ENCODE measurements at regions of chr18 and their contacts with region 1.

Region 1: DNA sequence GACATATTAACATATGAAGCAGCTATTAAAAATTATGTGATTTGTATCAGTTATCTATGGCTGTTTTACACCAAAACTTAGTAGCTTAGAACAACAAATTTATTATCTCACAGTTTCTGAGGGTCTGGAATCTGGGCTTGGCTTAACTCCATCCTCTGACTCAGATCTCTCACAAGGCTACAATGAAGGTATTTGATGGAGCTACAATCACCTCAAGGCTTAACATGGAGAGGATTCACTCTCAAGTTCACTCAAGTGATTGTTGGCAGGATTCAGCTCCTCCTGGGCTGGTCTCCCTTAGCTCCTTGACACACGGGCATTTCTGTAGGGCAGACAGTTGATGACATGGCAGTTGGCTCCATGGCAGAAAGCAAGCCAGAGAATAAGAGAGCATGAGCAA is 133.0 kb upstream of the SLC14A2 start:
- DNase-seq: no peak
- H3K4me3 ChIP-seq: no peak overlapping the region
- H3K27ac ChIP-seq: no peak overlapping the region
- H3K4me1 ChIP-seq: no peaks in the 10 kb centered on the region
- H3K27me3 ChIP-seq: no peaks in the 10 kb centered on the region
- CTCF ChIP-seq: no peak
- POLR2A ChIP-seq: no peak

Region 2: GRCh38 chr18:44819944-44820510 is 662.3 kb before region 1 on chr18:
- CTCF ChIA-PET with region 1: no interaction called
- POLR2A ChIA-PET with region 1: no interaction called
- dilution Hi-C with region 1: no loop called
- intact Hi-C with region 1: loop called (anchors 5 kb)
- DNase-seq: no peak
- H3K4me3 ChIP-seq: no peak overlapping the region
- H3K27ac ChIP-seq: no peak overlapping the region
- H3K4me1 ChIP-seq: no peaks in the 10 kb centered on the region
- H3K27me3 ChIP-seq: no peaks in the 10 kb centered on the region
- CTCF ChIP-seq: no peak
- POLR2A ChIP-seq: no peak